ENCODE measurements at regions of chr9 and their contacts with region 1.

Region 1: DNA sequence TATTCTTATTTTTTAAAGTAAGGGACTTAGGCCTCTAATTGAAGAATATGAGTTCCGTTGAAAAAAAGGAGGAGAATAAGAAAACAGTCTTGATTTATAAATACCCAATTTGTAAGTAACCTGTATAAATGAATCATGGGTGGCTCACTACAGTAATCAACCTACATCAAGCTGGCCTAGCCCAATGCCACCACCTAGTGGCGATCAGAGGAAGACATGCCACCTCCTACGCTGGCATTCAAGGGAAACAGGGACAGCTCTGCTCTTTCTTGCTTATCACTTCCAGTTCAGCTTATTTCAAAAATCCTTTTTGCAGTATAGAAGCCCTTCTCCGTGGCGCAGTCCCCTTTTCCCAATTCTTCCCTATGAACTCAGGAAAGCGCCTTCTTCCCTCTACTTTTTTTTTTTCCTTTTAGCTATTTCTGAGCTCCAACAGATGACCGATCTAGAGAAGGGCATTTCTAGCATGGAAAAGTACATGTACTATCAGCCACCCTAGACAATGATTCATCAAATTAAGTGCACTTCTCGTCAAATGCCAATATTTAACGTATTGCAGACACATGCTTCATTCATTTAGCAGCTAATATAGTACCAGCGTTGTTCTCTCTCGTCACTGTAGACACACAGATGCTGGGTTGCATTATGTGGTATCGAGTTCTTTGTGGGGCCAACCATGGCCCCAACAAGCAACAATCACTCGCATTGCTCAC is 28.3 kb downstream of the PTPN3 start:
- DNase-seq: peak; percentile 77
- H3K4me3 ChIP-seq: no peak overlapping the region
- H3K27ac ChIP-seq: no peak overlapping the region
- H3K4me1 ChIP-seq: no peaks in the 10 kb centered on the region
- H3K27me3 ChIP-seq: peaks cover 36 to 37% of the 10 kb centered on the region in 2 experiments
- CTCF ChIP-seq: peak; percentile 85 to 87
- POLR2A ChIP-seq: no peak

Region 2: DNA sequence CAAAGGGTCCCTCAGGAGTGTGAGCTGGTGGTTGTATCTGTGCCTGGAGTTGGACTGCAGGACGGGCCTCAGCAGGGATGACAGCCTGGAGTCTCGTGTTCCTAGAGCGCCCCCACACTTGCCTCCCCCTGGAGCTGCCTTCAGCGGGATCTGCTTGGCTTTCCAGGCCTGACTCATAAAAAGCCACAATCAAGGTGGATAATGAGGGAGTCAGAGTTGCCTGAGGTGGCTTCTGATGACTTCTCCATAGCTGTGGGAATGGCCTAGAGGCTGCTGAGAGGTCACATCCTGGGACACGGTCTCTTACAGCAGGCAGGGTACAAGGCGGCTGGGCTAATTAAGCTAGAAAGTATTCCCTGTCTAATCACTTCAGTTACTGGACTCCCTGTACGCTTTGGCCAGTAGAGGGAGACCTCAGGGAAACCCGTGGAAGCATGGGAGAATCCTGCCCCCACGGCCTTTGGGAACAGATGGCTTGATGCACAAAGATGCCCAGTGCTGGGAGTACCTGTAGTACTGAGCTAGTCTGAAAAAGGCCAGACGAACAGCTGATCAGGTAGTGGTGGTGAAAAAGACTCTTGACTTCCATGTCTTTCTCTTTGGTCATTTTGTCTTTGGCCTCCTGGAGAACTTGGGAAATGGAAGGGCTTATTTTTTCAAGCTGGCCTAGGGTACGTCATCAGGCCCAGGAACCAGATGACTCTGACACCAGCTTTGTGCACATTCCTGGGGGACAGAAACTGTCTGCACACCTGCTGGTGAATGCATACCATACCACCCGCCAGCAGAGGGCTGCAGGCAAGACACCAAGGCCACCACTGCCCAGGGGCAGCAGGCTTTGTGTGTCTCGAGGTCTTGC is 286.6 kb before region 1 on chr9:
- CTCF ChIA-PET with region 1: interaction called, 6 read pairs
- POLR2A ChIA-PET with region 1: no interaction called
- dilution Hi-C with region 1: no loop called
- intact Hi-C with region 1: loop called (anchors 2 kb)
- DNase-seq: peak; percentile 29
- H3K4me3 ChIP-seq: no peak overlapping the region
- H3K27ac ChIP-seq: no peak overlapping the region
- H3K4me1 ChIP-seq: no peaks in the 10 kb centered on the region
- H3K27me3 ChIP-seq: peaks cover 2 to 3% of the 10 kb centered on the region in 2 experiments
- CTCF ChIP-seq: peak; percentile 37 to 44
- POLR2A ChIP-seq: no peak

Region 3: DNA sequence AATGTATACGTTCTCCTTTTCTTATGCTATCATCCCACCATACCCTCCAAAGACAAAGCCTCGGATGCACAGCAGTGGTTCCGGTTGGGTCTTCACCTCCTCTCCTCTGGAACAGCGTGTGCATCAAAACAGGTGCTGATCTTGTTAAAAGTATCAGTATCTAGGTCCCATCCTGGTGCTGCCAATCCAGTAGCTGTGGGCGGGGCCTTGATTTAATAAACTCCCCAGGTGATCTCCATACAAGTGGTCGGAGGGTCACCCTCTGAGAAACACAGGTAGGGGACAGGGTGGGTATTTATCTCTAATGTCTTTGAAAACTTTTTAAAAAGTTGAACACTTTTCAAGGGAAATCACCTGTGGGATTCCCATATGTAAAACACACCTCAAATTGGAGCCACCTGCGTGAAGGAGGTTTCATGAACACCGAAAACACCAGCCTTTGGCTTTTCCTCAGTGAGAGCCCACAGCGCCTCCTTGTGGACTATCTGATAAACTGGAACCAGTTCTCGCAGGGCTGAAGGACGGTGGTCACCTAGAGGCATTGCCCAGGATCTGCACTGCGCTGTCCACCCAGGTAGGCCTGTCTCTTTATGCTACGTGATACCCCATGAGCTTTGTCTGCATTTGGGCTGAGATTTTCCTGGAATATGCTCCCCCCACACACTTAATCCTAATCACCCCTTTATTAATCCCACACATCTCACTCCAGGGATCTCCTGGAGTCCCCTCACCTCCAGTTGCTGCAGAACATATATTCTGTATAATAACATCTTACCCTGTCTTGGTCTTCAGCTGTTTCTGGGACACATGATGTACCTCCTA is 68.4 kb before region 1 on chr9:
- CTCF ChIA-PET with region 1: interaction called, 6 read pairs
- POLR2A ChIA-PET with region 1: no interaction called
- dilution Hi-C with region 1: no loop called
- intact Hi-C with region 1: loop called (anchors 5 kb)
- DNase-seq: peak; percentile 36
- H3K4me3 ChIP-seq: no peak overlapping the region
- H3K27ac ChIP-seq: no peak overlapping the region
- H3K4me1 ChIP-seq: no peaks in the 10 kb centered on the region
- H3K27me3 ChIP-seq: peaks cover 0 to 3% of the 10 kb centered on the region in 2 experiments
- CTCF ChIP-seq: peak; percentile 74 to 80
- POLR2A ChIP-seq: no peak

Region 4: GRCh38 chr9:109440797-109441287 is 29.0 kb before region 1 on chr9:
- CTCF ChIA-PET with region 1: interaction called, 81 read pairs
- POLR2A ChIA-PET with region 1: no interaction called
- dilution Hi-C with region 1: no loop called
- intact Hi-C with region 1: loop called (anchors 1 kb)
- DNase-seq: peak; percentile 74
- H3K4me3 ChIP-seq: no peak overlapping the region
- H3K27ac ChIP-seq: no peak overlapping the region
- H3K4me1 ChIP-seq: no peaks in the 10 kb centered on the region
- H3K27me3 ChIP-seq: peaks cover 13 to 23% of the 10 kb centered on the region in 2 experiments
- CTCF ChIP-seq: peak; percentile 70 to 73
- POLR2A ChIP-seq: no peak

Region 5: DNA sequence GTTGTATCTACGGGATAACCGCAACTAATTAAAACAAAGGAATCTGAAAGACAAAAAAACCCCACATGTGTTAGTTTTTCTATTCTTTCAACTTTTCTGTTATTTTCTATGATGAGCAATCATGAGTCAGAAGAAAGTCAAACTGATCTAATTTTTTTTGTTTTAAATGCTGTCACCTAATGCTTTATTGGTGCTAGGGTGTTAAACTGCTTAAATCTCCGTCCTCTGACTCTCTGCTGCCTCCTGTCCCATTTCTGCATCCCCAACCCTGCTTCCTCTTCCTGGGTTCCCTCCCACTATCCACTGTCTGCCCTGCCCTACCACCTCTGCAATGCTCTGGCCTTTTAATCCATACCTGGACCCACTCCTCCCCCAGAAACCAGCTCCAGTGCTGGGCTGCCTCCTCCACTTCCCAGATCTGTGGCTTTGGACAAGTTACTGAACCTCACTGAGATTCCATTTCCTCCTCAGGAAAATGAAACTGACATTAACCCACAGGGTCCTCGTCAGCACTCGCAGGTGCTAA is 12.7 kb after region 1 on chr9:
- CTCF ChIA-PET with region 1: interaction called, 17 read pairs
- POLR2A ChIA-PET with region 1: no interaction called
- dilution Hi-C with region 1: no loop called
- intact Hi-C with region 1: no loop called
- DNase-seq: no peak
- H3K4me3 ChIP-seq: no peak overlapping the region
- H3K27ac ChIP-seq: no peak overlapping the region
- H3K4me1 ChIP-seq: no peaks in the 10 kb centered on the region
- H3K27me3 ChIP-seq: peaks cover 5 to 8% of the 10 kb centered on the region in 2 experiments
- CTCF ChIP-seq: no peak
- POLR2A ChIP-seq: no peak